GM12878 (cell line): ENCODE measurements at regions of chr13 and their contacts with region 1.

Region 1: GRCh38 chr13:62512194-62513141 is 1096.8 kb upstream of the PCDH20 start:
- DNase-seq: peak; percentile 24
- ATAC-seq: peak; percentile 98
- H3K4me3 ChIP-seq: peak overlapping the region; percentile 55; the same call in 1 of the 2 replicates
- H3K27ac ChIP-seq: no peak overlapping the region
- H3K4me1 ChIP-seq: peaks cover 11% of the 10 kb centered on the region; the same call in 1 of the 2 replicates
- H3K27me3 ChIP-seq: no peaks in the 10 kb centered on the region
- CTCF ChIP-seq: peak; percentile 84 to 89 (median 88)
- EP300 ChIP-seq: no peak
- POLR2A ChIP-seq: no peak
- RAD21 ChIP-seq: peak; percentile 91

Region 2: DNA sequence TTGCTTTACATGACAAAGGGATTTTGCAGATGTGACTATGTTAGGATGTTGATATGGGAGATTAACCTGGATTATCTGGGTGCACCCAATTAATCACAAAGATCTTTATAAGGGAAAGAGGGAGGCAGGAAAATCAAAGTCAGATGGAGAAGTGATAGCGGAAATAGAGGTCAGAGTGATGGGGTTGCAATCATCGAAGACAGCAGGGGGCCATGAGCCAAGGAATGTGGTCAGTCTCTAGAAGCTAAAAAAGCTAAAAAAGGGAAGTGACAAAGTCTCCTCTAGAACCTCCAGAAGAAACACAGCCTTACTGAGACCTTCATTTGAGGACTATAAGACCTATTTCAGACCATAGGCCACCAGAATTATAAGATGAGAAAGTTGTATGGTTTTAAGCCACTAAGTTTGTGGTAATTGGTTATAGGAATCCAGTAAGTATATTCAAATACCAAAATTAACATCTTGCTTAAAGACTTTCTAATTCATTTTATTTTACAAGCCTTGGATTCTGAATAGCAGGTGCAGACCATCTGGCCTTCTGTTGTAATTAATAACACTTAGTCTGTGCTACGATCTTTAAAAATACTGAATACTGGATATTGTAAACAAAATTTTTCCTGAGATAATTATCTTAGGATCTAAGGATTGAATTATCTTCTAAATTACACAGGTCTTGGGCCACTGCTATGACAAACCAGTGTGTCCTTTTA is 603.4 kb before region 1 on chr13:
- CTCF ChIA-PET with region 1: no interaction called
- POLR2A ChIA-PET with region 1: no interaction called
- RAD21 ChIA-PET with region 1: no interaction called
- SMC1A ChIA-PET with region 1: no interaction called
- in situ Hi-C with region 1: no loop called
- intact Hi-C with region 1: no loop called
- DNase-seq: no peak
- ATAC-seq: no peak; the same call in 2 of the 3 replicates
- H3K4me3 ChIP-seq: no peak overlapping the region
- H3K27ac ChIP-seq: no peak overlapping the region
- H3K4me1 ChIP-seq: no peaks in the 10 kb centered on the region
- H3K27me3 ChIP-seq: no peaks in the 10 kb centered on the region
- CTCF ChIP-seq: no peak
- EP300 ChIP-seq: no peak
- POLR2A ChIP-seq: no peak
- RAD21 ChIP-seq: no peak

Region 3: DNA sequence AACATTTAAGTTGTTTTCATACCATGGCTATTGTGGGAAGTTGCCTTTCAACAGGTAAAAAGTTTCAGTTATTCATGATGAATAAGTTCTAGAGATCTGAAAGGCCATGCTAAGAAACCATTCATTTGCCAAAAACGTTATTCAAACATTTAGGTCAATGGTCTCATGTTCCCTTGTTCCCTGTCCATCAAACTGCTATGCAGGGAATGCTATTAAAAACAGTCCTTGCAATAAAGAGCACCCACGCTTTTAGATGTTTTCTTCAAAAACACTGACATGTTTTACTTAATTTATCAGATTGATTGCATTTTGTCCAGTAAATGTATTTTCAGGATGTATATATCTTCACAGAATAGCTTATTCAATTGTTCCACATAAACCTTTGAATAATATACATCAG is 523.7 kb before region 1 on chr13:
- CTCF ChIA-PET with region 1: no interaction called
- POLR2A ChIA-PET with region 1: no interaction called
- RAD21 ChIA-PET with region 1: no interaction called
- SMC1A ChIA-PET with region 1: no interaction called
- in situ Hi-C with region 1: no loop called
- intact Hi-C with region 1: no loop called
- DNase-seq: no peak
- ATAC-seq: no peak
- H3K4me3 ChIP-seq: no peak overlapping the region
- H3K27ac ChIP-seq: no peak overlapping the region
- H3K4me1 ChIP-seq: no peaks in the 10 kb centered on the region
- H3K27me3 ChIP-seq: no peaks in the 10 kb centered on the region
- CTCF ChIP-seq: no peak
- EP300 ChIP-seq: no peak
- POLR2A ChIP-seq: no peak
- RAD21 ChIP-seq: no peak

Region 4: DNA sequence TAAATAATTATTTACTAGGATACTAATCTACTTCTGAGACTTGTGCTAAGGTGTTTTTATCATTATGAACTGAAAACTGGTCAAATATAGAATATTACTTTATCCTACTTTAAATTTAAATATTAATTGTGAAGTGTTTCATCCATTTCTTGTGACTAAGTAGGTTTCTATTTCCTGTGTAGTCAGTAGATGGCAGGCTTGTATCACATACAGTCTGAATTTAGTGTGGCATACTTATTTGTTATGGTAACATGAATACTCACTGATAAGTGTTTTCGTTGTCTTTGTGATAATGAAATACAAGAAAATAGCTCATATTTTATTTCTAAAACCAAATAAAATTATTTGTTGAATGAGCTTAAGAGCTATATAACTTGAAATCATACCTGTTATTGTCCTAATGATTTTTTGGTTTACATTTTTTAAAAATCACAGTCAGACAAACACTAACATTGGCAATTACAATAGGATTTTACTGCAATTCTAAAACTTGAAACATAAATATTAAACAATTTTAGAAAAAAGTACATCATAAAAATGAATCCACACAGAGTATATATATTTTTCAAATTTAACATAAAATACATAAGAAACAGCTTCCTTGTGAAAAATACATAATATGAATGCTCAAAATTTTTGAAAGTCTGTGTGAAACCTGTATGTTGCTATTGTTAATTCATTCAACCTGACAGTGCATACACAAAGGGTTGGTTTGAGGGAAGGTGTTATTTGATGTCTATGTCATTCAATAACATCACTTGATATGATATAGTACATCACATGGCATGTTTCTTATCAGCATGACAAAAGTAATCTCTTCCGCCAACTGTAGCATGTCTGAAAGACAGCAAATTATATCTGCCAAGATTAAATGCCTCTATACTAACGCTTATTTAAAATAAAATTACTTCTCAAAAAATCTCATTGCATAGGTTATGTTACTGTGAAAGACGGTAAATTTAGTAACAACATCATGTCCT is 192.0 kb before region 1 on chr13:
- CTCF ChIA-PET with region 1: interaction called, 3 read pairs
- POLR2A ChIA-PET with region 1: no interaction called
- RAD21 ChIA-PET with region 1: no interaction called
- SMC1A ChIA-PET with region 1: no interaction called
- in situ Hi-C with region 1: no loop called
- intact Hi-C with region 1: loop called (anchors 10 kb)
- DNase-seq: peak; percentile 36
- ATAC-seq: peak; percentile 85
- H3K4me3 ChIP-seq: no peak overlapping the region
- H3K27ac ChIP-seq: no peak overlapping the region
- H3K4me1 ChIP-seq: no peaks in the 10 kb centered on the region
- H3K27me3 ChIP-seq: no peaks in the 10 kb centered on the region
- CTCF ChIP-seq: peak; percentile 50 to 66 (median 55); a peak in 5 of 6 replicates
- EP300 ChIP-seq: no peak
- POLR2A ChIP-seq: no peak
- RAD21 ChIP-seq: peak; percentile 92

Region 5: DNA sequence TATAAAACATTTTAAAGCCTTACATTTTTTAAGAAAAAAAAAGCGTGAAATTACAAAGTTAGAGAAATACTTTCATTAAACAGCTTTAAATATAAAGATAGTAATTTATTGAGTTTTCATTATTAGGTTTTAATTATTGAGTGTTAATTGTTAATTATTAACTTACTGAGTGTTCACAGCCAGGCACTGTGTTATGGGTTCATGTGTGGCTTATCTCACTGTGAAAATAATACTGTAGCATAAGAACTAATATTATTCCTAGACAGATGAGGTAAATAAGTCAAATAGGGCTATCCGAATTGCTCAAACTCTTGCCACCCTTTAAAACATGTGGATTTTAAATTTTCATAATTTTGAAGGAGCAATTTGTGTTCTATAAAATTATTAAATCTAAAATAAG is 140.7 kb before region 1 on chr13:
- CTCF ChIA-PET with region 1: no interaction called
- POLR2A ChIA-PET with region 1: no interaction called
- RAD21 ChIA-PET with region 1: no interaction called
- SMC1A ChIA-PET with region 1: no interaction called
- in situ Hi-C with region 1: no loop called
- intact Hi-C with region 1: no loop called
- DNase-seq: no peak
- ATAC-seq: no peak
- H3K4me3 ChIP-seq: no peak overlapping the region
- H3K27ac ChIP-seq: no peak overlapping the region
- H3K4me1 ChIP-seq: no peaks in the 10 kb centered on the region
- H3K27me3 ChIP-seq: no peaks in the 10 kb centered on the region
- CTCF ChIP-seq: no peak
- EP300 ChIP-seq: no peak
- POLR2A ChIP-seq: no peak
- RAD21 ChIP-seq: no peak

Region 6: GRCh38 chr13:62489731-62490130 is 22.7 kb before region 1 on chr13:
- CTCF ChIA-PET with region 1: interaction called, 15 read pairs
- POLR2A ChIA-PET with region 1: no interaction called
- RAD21 ChIA-PET with region 1: no interaction called
- SMC1A ChIA-PET with region 1: no interaction called
- in situ Hi-C with region 1: no loop called
- intact Hi-C with region 1: no loop called
- DNase-seq: no peak
- ATAC-seq: no peak
- H3K4me3 ChIP-seq: no peak overlapping the region
- H3K27ac ChIP-seq: no peak overlapping the region
- H3K4me1 ChIP-seq: no peaks in the 10 kb centered on the region
- H3K27me3 ChIP-seq: no peaks in the 10 kb centered on the region
- CTCF ChIP-seq: no peak
- EP300 ChIP-seq: no peak
- POLR2A ChIP-seq: no peak
- RAD21 ChIP-seq: no peak

Region 7: GRCh38 chr13:62524061-62524460 is 11.6 kb after region 1 on chr13:
- CTCF ChIA-PET with region 1: interaction called, 27 read pairs
- POLR2A ChIA-PET with region 1: no interaction called
- RAD21 ChIA-PET with region 1: interaction called, 5 read pairs
- SMC1A ChIA-PET with region 1: interaction called, 22 read pairs
- in situ Hi-C with region 1: no loop called
- intact Hi-C with region 1: no loop called
- DNase-seq: peak; percentile 30
- ATAC-seq: peak; percentile 90
- H3K4me3 ChIP-seq: 0 out of 2 replicates have a peak overlapping the region, but pooled peaks have one; percentile 6
- H3K27ac ChIP-seq: peak overlapping the region; percentile 83
- H3K4me1 ChIP-seq: peaks cover 15% of the 10 kb centered on the region
- H3K27me3 ChIP-seq: no peaks in the 10 kb centered on the region
- CTCF ChIP-seq: no peak
- EP300 ChIP-seq: peak; percentile 34 to 86; a peak in 2 of 4 replicates
- POLR2A ChIP-seq: no peak
- RAD21 ChIP-seq: no peak

Region 8: GRCh38 chr13:62544928-62545327 is 32.5 kb after region 1 on chr13:
- CTCF ChIA-PET with region 1: interaction called, 28 read pairs
- POLR2A ChIA-PET with region 1: no interaction called
- RAD21 ChIA-PET with region 1: interaction called, 12 read pairs
- SMC1A ChIA-PET with region 1: interaction called, 14 read pairs
- in situ Hi-C with region 1: no loop called
- intact Hi-C with region 1: loop called (anchors 1 kb)
- DNase-seq: no peak
- ATAC-seq: no peak
- H3K4me3 ChIP-seq: no peak overlapping the region
- H3K27ac ChIP-seq: no peak overlapping the region
- H3K4me1 ChIP-seq: no peaks in the 10 kb centered on the region
- H3K27me3 ChIP-seq: no peaks in the 10 kb centered on the region
- CTCF ChIP-seq: peak in 1 of 3 experiments; percentile 28; a peak in 1 of 6 replicates
- EP300 ChIP-seq: no peak
- POLR2A ChIP-seq: no peak
- RAD21 ChIP-seq: peak; percentile 47

Region 9: GRCh38 chr13:62678039-62678438 is 165.6 kb after region 1 on chr13:
- CTCF ChIA-PET with region 1: no interaction called
- POLR2A ChIA-PET with region 1: no interaction called
- RAD21 ChIA-PET with region 1: no interaction called
- SMC1A ChIA-PET with region 1: no interaction called
- in situ Hi-C with region 1: no loop called
- intact Hi-C with region 1: no loop called
- DNase-seq: no peak
- ATAC-seq: no peak
- H3K4me3 ChIP-seq: no peak overlapping the region
- H3K27ac ChIP-seq: no peak overlapping the region
- H3K4me1 ChIP-seq: no peaks in the 10 kb centered on the region
- H3K27me3 ChIP-seq: no peaks in the 10 kb centered on the region; a peak in 1 of 4 replicates
- CTCF ChIP-seq: no peak
- EP300 ChIP-seq: no peak
- POLR2A ChIP-seq: no peak
- RAD21 ChIP-seq: no peak

Region 10: DNA sequence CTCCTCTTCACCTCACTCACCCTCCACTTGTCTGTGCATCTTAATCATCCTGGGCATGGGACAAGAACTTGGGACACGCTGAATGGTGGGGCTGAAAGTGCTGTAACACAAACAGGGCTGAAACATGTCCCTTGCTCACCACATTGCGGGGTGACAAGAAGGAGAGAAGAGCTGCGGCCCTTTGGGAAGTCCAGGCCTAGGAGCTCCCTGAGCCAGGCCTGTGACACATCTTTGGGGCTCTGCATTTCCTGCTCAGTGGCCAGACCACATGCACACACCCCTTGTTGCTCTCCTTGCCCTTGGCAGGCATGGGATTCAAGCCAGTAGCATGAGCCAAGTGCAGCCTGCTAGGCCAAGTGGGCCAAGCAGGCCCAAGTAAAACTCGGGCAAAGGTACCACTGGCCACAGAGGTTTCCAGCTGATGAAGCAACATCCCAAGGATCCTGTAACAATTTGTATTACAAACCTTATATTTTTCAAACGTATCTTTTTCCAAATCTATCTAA is 287.5 kb after region 1 on chr13:
- CTCF ChIA-PET with region 1: no interaction called
- POLR2A ChIA-PET with region 1: no interaction called
- RAD21 ChIA-PET with region 1: no interaction called
- SMC1A ChIA-PET with region 1: no interaction called
- in situ Hi-C with region 1: no loop called
- intact Hi-C with region 1: loop called (anchors 10 kb)
- DNase-seq: no peak
- ATAC-seq: no peak
- H3K4me3 ChIP-seq: no peak overlapping the region
- H3K27ac ChIP-seq: no peak overlapping the region
- H3K4me1 ChIP-seq: no peaks in the 10 kb centered on the region
- H3K27me3 ChIP-seq: no peaks in the 10 kb centered on the region
- CTCF ChIP-seq: no peak
- EP300 ChIP-seq: no peak
- POLR2A ChIP-seq: no peak
- RAD21 ChIP-seq: no peak

Region 11: DNA sequence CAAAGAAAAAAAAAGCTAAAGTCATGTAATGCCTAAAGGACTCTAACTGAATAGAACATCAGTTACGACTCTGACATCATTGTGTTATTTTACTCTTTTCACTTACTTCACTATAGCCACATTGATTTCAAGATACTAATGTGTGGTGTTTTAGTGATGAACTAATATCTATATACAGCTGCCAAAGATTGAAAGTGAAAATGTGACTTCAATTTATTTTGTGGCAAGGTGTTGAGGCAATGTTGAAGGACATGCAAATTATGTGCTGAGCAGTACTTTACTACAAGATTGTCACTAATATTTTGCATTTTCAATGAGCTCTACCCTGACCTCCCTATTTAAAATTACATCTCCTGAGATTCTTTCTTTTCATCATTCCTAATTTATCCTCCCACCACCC is 815.1 kb after region 1 on chr13:
- CTCF ChIA-PET with region 1: no interaction called
- POLR2A ChIA-PET with region 1: no interaction called
- RAD21 ChIA-PET with region 1: no interaction called
- SMC1A ChIA-PET with region 1: no interaction called
- in situ Hi-C with region 1: no loop called
- intact Hi-C with region 1: loop called (anchors 5 kb)
- DNase-seq: no peak
- ATAC-seq: peak; percentile 72
- H3K4me3 ChIP-seq: no peak overlapping the region
- H3K27ac ChIP-seq: no peak overlapping the region
- H3K4me1 ChIP-seq: no peaks in the 10 kb centered on the region
- H3K27me3 ChIP-seq: no peaks in the 10 kb centered on the region
- CTCF ChIP-seq: no peak
- EP300 ChIP-seq: no peak
- POLR2A ChIP-seq: no peak
- RAD21 ChIP-seq: no peak